Activated CD4-positive, alpha-beta T cell treated with anti-CD3 and anti-CD28 coated beads for 36 hours (primary cell): ENCODE measurements at regions of chr5 and their contacts with region 1.

Region 1: DNA sequence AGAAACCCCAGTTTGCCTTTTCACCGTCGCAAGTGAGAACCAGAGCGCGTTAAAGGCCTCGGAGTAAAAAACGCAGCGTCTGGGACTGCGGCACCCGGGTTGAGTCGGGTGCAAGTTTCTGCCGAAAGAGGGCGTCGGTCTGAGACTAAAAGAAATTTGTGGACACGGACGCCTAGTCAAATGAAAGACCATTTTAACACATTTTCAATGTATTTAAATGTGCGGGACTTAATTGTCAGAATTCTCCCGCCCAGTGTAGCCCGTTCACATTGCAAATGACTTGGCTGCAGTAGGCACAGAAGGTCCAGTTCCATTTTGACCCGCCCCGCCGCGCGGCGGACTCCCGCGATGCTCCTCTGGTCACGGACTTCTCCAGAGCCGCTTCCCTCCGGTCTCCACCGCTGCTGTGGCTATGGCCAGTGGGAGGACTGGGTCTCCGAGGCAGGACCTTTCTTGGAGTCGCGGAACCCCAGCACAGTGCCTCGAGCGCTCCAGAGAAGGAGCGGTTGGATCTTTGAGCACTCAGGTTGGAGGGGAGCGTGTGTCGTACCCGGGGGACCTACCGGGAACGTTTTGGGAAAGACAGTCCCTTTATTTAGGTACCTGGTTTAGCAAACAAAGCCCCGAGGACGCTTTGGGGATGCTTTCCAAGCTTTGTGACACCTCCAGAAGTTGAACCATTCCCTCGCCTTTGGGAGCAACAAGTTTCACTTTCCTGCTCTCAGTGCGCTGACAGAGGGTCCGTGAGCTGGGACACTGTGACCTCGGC is 1.2 kb upstream of the NPR3 start:
- DNase-seq: peak; percentile 80
- ATAC-seq: peak; percentile 64
- H3K4me3 Mint-ChIP-seq: peak overlapping the region; percentile 68
- H3K27ac Mint-ChIP-seq: no peak overlapping the region
- H3K4me1 Mint-ChIP-seq: peaks cover 27% of the 10 kb centered on the region
- H3K27me3 Mint-ChIP-seq: peaks cover 68% of the 10 kb centered on the region

Region 2: GRCh38 chr5:32489791-32490582 is 220.0 kb before region 1 on chr5:
- CTCF ChIA-PET with region 1: no interaction called
- POLR2A ChIA-PET with region 1: no interaction called
- intact Hi-C with region 1: no loop called
- DNase-seq: peak; percentile 85
- ATAC-seq: peak; percentile 53
- H3K4me3 Mint-ChIP-seq: no peak overlapping the region
- H3K27ac Mint-ChIP-seq: no peak overlapping the region
- H3K4me1 Mint-ChIP-seq: no peaks in the 10 kb centered on the region
- H3K27me3 Mint-ChIP-seq: no peaks in the 10 kb centered on the region

Region 3: DNA sequence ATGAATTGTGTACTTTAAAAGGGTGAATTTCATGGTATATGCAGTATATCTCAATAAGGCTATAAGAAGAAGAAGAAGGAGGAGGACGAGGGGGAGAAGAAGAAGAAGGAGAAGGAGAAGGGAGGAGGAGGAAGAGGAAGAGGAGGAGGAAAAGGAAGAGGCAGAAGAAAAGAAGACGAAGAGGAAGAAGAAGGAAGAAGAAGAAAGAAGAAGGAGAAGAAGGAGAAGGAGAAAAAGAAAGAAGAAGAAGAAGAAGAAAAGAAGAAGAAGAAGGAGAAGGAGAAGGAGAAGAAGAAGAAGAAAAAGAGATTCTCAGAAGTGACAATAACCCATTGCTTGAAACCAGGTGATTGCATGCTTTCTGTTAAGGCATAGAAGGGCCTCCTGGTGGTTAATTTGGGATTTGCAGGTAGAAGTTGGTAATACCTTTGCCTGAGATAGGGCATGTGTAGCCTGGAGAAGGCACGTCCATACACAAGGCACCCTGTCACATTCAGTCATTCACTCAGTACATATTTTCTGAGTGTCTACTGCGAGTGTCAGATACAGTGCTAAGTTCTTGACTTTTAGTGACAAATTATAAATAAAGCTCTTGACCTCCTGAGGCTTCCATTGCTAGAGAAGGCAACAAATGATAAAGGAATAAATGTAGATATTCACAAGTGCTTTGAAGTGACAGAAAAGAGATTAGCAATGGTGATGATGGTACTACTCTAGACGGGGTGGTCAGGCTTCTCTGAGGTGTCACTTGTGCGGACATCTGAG is 232.4 kb after region 1 on chr5:
- CTCF ChIA-PET with region 1: no interaction called
- POLR2A ChIA-PET with region 1: no interaction called
- intact Hi-C with region 1: loop called (anchors 5 kb)
- DNase-seq: peak; percentile 24
- ATAC-seq: no peak
- H3K4me3 Mint-ChIP-seq: no peak overlapping the region
- H3K27ac Mint-ChIP-seq: no peak overlapping the region
- H3K4me1 Mint-ChIP-seq: no peaks in the 10 kb centered on the region
- H3K27me3 Mint-ChIP-seq: no peaks in the 10 kb centered on the region

Region 4: DNA sequence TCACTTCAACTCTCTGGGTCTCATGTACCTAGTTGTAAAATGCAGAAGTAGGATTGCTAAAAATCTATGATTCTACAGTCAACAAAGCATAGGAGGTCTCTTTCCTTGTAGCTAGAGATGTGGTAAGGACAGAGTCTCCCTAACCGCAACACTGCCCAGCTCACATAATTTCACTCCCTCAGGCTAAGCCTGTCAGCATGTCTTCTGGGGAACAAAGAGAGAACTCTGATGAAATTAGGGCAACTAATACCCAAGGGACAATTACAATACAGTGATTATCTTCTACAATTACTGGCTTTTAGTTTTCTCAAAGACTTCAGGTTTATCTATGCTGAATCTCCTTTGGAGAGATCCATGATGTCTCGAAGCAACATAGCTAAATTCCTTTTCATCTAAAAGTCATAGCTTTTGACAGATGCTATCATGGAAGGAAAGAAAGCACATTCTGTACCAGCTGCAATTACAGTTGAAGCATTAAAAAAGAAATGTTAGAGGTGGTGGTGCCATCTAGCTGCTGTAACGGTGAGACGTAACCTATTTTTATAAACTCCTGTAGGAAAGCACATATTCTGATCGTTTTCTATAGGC is 589.8 kb after region 1 on chr5:
- CTCF ChIA-PET with region 1: no interaction called
- POLR2A ChIA-PET with region 1: no interaction called
- intact Hi-C with region 1: loop called in 1 of 2 experiments (anchors 5 kb)
- DNase-seq: no peak
- ATAC-seq: peak; percentile 35
- H3K4me3 Mint-ChIP-seq: no peak overlapping the region
- H3K27ac Mint-ChIP-seq: no peak overlapping the region
- H3K4me1 Mint-ChIP-seq: peaks cover 13% of the 10 kb centered on the region
- H3K27me3 Mint-ChIP-seq: peaks cover 8% of the 10 kb centered on the region

Region 5: DNA sequence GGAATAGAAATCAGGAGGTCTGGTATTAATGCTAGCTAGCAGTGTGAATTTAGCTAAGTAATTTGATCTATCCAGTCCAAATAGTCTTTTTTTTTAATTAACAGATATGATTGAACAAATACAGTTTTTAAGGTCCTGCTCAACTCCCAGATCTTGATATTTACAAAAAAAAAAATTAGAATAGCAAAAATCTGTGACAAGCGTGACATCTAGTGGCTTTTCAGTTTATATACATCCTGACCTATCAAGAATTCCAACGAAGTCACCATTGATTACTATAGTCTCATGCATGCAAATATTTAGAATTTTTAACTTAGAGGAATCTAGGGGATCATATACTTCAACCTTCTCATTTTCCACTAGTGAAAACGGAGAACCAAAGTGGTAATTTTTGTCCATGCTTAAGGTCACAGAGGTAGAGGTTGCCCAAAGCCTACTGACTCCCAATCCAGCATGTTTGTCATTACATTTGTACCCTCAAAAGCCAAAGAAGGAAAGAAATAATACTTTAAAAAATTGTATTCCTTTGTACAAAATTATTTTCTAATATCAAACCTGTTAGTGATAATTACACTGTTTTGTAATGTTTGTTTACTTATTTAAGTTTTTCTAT is 713.2 kb after region 1 on chr5:
- CTCF ChIA-PET with region 1: no interaction called
- POLR2A ChIA-PET with region 1: no interaction called
- intact Hi-C with region 1: loop called (anchors 1 to 2 kb)
- DNase-seq: no peak
- ATAC-seq: no peak
- H3K4me3 Mint-ChIP-seq: no peak overlapping the region
- H3K27ac Mint-ChIP-seq: no peak overlapping the region
- H3K4me1 Mint-ChIP-seq: no peaks in the 10 kb centered on the region
- H3K27me3 Mint-ChIP-seq: peaks cover 12% of the 10 kb centered on the region

Region 6: DNA sequence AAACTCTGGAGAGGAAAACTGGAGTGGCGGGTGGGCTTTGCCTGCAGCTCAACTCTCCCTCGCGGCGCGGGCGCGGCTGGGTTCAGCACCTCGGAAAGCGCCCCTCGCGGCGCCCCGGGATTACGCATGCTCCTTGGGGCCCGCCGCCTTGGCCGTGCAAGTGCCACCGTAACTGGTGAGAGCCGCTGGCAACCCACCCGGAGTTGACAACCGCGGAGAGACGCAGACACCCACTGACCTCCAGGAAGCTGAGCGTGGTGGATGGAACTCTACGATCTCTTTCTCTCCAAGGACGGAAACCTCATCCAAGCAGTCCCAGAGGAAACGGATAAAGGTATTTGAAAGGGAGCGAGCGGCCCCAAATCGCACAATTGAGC is 1226.0 kb after region 1 on chr5:
- CTCF ChIA-PET with region 1: no interaction called
- POLR2A ChIA-PET with region 1: no interaction called
- intact Hi-C with region 1: loop called in 1 of 2 experiments (anchors 10 kb)
- DNase-seq: peak; percentile 75
- ATAC-seq: peak; percentile 49
- H3K4me3 Mint-ChIP-seq: no peak overlapping the region
- H3K27ac Mint-ChIP-seq: no peak overlapping the region
- H3K4me1 Mint-ChIP-seq: no peaks in the 10 kb centered on the region
- H3K27me3 Mint-ChIP-seq: peaks cover 41% of the 10 kb centered on the region